GM23248 (cell line): ENCODE measurements at regions of chr6 and their contacts with region 1.

Region 1: DNA sequence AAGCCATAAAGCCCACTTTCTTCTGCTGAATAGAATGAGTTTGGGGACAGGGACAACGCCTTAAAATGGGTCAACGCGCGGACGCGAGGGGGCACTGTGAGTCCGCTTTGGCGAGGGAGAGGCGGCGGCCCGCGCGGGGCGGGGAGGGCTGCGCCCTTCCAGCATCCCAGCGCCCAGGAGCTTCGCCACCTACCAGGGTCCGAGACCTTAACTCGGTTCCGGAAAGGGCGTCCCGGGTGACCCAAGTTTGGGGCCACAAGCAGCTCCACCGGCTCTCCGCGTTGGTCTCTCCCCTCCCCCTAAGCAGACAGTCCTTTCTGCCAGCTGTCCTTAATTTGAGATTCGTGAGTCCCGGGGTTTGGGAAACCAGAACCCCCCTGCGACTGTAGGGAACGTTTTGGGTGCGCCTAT is 1.8 kb upstream of the SAMD5 start:
- DNase-seq: peak; percentile 66
- H3K4me3 ChIP-seq: peak overlapping the region; percentile 73
- H3K27ac ChIP-seq: no peak overlapping the region
- H3K4me1 ChIP-seq: no peaks in the 10 kb centered on the region; the same call in 1 of the 2 replicates
- H3K27me3 ChIP-seq: peaks cover 39% of the 10 kb centered on the region

Region 2: DNA sequence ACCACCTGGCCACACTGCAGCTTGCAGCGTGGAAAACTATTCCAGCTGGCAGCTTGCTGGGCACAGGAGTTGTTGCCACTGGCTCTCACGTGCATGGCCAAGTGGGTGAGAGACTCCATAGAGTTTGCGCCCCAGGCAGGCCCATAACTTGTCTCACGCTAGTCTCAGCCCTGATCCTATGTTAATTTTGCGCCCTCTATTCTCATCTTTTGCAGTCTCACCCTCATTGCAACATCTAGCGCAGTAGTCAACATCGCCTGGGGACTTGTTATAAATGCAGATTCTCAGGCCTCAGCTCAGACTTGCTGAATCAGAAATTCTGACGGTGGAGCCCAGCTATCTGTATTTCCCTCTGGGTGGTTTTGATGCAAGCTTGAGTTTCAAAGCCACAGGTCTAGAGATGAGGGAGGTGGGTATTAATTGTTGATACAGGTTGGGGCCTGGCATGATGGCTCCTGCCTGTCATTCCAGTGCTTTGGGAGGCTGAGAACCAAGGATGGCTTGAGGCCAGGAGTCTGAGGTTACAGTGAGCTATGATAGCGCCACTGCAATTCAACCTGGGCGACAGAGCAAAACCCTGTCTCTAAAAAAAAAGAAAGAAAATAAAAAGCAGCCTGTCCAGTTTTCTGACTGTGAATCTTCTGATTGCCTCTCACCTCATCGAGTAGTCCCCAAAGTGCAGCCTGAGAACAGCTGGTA is 651.0 kb after region 1 on chr6:
- in situ Hi-C with region 1: loop called (anchors 10 kb)
- DNase-seq: no peak
- H3K4me3 ChIP-seq: no peak overlapping the region
- H3K27ac ChIP-seq: no peak overlapping the region
- H3K4me1 ChIP-seq: no peaks in the 10 kb centered on the region
- H3K27me3 ChIP-seq: peaks cover 17% of the 10 kb centered on the region

Region 3: GRCh38 chr6:148240461-148240840 is 733.7 kb after region 1 on chr6:
- in situ Hi-C with region 1: loop called (anchors 10 kb)
- DNase-seq: peak; percentile 95
- H3K4me3 ChIP-seq: peak overlapping the region; percentile 44
- H3K27ac ChIP-seq: peak overlapping the region; percentile 92
- H3K4me1 ChIP-seq: peaks cover 36% of the 10 kb centered on the region
- H3K27me3 ChIP-seq: no peaks in the 10 kb centered on the region